Colonic mucosa (tissue), 4 donors: ENCODE measurements at regions of chr2 and their contacts with region 1.

Region 1: DNA sequence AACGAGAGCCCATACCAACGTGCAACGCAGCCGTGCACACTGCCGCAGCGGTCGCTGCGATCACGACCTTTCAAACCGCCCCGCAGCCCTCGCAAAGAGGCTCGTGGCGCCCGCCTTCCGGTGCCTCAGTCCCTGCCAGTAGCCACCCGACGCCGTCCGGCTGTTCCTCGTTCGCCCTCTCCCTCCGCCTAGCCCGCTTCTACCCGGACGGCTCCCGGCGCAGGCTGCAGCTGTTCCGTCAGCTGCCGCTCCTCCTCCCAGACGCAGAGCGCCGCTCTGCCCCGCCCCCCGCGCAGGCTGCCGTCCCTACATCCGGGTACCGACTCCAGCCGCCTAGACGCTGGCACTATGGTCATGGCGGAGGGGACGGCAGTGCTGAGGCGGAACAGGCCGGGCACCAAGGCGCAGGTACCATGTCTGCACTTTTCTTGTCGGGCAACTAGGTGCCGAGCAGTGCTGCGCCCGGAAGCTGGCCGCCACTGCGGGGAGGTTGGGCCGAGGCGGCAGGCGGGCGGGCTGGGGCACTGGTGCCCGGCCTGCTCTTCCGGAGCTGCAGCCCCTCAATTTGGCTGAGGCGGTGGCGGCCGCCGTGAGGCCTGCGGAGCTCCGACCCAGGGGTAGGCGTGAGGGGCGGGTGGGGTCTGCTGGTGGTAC is at the start of gene MOB4:
- DNase-seq: peak; percentile 96
- H3K4me3 ChIP-seq: peak within 1 kb of the TSS; percentile 87
- H3K27ac ChIP-seq: peak within 1 kb of the TSS; percentile 97
- H3K4me1 ChIP-seq: no peaks in the 10 kb centered on the region
- H3K27me3 ChIP-seq: no peaks in the 10 kb centered on the region
- CTCF ChIP-seq: no peak
- total RNA-seq, gene MOB4: 24.7 to 34.1 TPM

Region 2: GRCh38 chr2:197414515-197414914 is 101.4 kb before region 1 on chr2:
- intact Hi-C with region 1: no loop called
- DNase-seq: no peak
- H3K4me3 ChIP-seq: no peak overlapping the region
- H3K27ac ChIP-seq: no peak overlapping the region
- H3K4me1 ChIP-seq: no peaks in the 10 kb centered on the region
- H3K27me3 ChIP-seq: no peaks in the 10 kb centered on the region
- CTCF ChIP-seq: no peak

Region 3: DNA sequence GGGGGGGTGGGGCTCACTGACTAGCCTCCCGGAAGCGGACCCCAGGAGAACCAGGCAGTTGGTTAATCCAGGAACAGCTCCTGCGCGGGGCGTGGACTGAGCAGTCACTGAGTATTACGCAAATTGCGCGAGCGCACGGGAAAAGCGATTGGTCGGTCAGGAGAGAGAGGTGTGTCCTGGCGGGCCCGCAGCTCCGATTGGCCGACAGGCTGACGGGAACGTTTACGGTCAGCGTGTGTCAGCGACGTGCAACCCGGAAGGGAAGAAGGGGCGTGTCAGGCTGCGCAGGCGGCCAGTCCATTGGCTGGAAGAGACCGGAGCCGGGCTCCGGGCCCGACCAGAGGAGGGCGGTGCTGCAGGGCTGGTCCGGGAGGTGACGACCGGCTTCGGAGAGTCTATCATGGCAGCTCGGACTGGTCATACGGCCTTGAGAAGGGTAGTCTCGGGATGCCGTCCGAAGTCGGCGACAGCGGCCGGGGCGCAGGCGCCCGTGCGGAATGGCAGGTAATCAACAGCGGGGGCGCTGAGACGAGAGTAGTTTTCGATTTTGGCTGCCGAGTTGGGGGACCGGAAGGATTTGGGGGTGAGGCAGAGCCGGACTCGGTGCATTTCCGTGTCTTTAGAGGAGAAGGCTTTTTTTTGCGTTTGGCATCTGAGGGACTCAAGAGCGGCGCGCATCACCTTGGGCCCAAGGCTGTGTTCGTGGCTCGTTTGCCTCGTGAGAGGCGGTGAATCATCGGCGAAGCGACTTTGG is 62.5 kb before region 1 on chr2 and contains the start of gene COQ10B:
- intact Hi-C with region 1: loop called (anchors 10 kb)
- DNase-seq: peak; percentile 99
- H3K4me3 ChIP-seq: peak within 1 kb of the TSS; percentile 59
- H3K27ac ChIP-seq: peak within 1 kb of the TSS; percentile 96
- H3K4me1 ChIP-seq: peaks cover 9% of the 10 kb centered on the region
- H3K27me3 ChIP-seq: no peaks in the 10 kb centered on the region
- CTCF ChIP-seq: no peak
- total RNA-seq, gene COQ10B: 15.5 to 38.5 TPM

Region 4: GRCh38 chr2:197705121-197705911 is 189.4 kb after region 1 on chr2 and contains the start of gene MARS2:
- intact Hi-C with region 1: loop called (anchors 10 kb)
- DNase-seq: peak; percentile 93
- H3K4me3 ChIP-seq: peak within 1 kb of the TSS; percentile 96
- H3K27ac ChIP-seq: peak within 1 kb of the TSS; percentile 69
- H3K4me1 ChIP-seq: peaks cover 5% of the 10 kb centered on the region
- H3K27me3 ChIP-seq: no peaks in the 10 kb centered on the region
- CTCF ChIP-seq: no peak
- total RNA-seq, gene MARS2: 8.3 to 17.0 TPM

Region 5: DNA sequence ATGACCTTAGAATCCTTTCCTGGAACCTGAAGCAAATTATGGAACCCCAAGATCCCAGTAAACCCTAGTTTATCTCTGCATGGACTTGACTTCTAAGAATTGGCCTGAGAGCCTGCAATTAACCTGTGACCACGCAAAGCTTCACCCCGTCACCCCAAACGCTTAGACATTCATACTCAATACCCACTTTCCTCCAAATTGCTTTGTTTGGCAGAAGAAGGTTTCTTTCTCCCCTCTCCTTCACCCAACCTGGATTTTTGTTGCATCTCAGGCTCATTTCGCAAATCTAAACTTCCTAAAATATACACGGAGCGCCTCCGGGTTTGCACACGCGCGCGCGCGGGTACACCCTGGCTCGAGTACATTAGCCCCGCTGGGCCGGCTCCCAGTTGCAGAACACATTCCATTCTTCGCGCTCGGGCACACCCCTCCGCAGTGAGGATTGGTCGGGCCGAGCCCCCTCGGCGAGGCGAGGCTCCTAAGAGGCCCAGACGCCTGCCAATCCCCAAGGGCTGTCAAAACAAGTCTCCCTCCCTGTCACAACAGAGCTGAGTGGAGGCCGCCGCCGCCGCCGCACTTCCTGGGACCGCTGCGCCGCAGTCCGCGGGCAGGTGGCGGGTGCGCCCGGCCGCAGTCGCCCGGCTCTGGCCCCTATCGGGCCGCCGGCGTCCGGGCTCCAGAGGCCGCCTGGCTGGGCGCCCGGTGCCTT is 288.3 kb after region 1 on chr2 and contains the start of gene PLCL1:
- intact Hi-C with region 1: no loop called
- DNase-seq: peak; percentile 92
- H3K4me3 ChIP-seq: peak within 1 kb of the TSS; percentile 65
- H3K27ac ChIP-seq: no peak within 1 kb of the TSS
- H3K4me1 ChIP-seq: no peaks in the 10 kb centered on the region
- H3K27me3 ChIP-seq: peaks cover 9% of the 10 kb centered on the region
- CTCF ChIP-seq: no peak
- total RNA-seq, gene PLCL1: 0.30 to 1.3 TPM

Region 6: GRCh38 chr2:197889041-197889440 is 373.2 kb after region 1 on chr2:
- intact Hi-C with region 1: no loop called
- DNase-seq: no peak
- H3K4me3 ChIP-seq: no peak overlapping the region
- H3K27ac ChIP-seq: no peak overlapping the region
- H3K4me1 ChIP-seq: no peaks in the 10 kb centered on the region
- H3K27me3 ChIP-seq: no peaks in the 10 kb centered on the region
- CTCF ChIP-seq: no peak